Posterior vena cava (tissue), 2 donors: ENCODE measurements at regions of chr1 and their contacts with region 1.

Region 1: DNA sequence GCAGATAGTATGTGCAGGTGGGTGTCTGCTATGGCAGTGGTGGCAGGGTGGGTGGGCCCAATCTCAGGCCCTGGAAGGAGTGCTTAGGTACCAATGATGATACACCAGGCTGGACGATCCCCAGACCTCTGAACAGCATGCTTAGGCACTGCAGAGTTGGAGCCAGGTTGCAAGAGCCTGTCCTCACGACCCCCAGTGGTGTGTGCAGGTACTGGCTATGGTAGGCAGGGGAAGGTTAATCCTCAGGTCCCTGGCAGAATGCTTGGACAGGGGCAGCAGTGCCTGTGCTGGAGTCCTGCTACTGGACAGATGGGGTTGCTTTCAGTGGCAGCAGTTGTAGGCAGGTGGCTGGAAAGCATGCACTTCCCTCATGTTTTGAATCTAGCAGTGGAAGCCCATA is 100.5 kb upstream of the NEK7 start:
- DNase-seq: no peak

Region 2: DNA sequence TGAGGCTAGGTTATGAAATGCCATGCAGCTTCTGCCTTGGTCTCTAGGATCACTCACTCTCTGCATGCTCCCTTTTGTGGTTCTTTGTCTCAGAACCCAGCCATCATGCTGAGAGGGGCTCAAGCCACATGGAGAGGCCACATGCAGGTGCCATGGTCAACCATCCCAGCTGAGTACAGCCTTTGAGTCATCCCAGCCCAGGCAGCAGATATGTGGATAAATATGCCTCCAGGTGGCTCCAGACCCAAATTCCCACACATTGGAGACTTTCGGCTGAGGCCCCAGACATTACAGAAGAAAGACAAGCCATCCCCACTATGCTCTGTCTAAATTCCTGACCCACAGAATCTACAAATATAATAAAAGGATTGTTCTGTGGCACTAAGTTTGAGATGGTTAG is 37.1 kb before region 1 on chr1:
- intact Hi-C with region 1: loop called in 1 of 2 experiments (anchors 1 kb)
- DNase-seq: no peak